AG04449 (cell line): ENCODE measurements at regions of chr14 and their contacts with region 1.

Region 1: GRCh38 chr14:92456215-92457015 is 57.2 kb upstream of the RIN3 start:
- DNase-seq: peak; percentile 14
- H3K4me3 ChIP-seq: no peak overlapping the region
- CTCF ChIP-seq: peak; percentile 80

Region 2: GRCh38 chr14:92135267-92135666 is 321.1 kb before region 1 on chr14:
- CTCF ChIA-PET with region 1: interaction called, 48 read pairs
- POLR2A ChIA-PET with region 1: interaction called, 3 read pairs
- DNase-seq: no peak
- H3K4me3 ChIP-seq: no peak overlapping the region
- CTCF ChIP-seq: peak; percentile 33

Region 3: GRCh38 chr14:92471919-92472318 is 15.5 kb after region 1 on chr14:
- CTCF ChIA-PET with region 1: interaction called, 39 read pairs
- POLR2A ChIA-PET with region 1: interaction called, 3 read pairs
- DNase-seq: peak; percentile 47
- H3K4me3 ChIP-seq: no peak overlapping the region
- CTCF ChIP-seq: no peak

Region 4: DNA sequence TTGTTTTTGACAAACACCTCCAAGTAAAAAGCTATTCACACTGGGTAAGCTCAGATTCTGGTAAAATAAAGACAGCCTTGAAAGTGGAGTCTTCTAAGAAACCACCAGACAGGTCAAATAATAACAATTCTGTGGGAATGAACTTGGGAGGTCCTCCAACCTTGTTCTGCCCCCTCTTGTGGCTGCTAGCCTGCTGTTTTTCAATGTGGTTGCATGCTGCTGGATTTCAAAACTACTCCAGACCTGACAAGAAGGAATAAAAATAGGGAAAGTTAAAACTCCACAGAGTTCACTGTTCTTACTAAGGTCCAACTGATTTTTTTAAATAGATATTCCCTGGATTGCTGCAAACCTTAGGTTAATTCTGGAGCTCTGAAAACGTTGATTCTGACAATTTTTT is 25.0 kb after region 1 on chr14:
- CTCF ChIA-PET with region 1: interaction called, 11 read pairs
- POLR2A ChIA-PET with region 1: no interaction called
- DNase-seq: no peak
- H3K4me3 ChIP-seq: no peak overlapping the region
- CTCF ChIP-seq: peak; percentile 37

Region 5: DNA sequence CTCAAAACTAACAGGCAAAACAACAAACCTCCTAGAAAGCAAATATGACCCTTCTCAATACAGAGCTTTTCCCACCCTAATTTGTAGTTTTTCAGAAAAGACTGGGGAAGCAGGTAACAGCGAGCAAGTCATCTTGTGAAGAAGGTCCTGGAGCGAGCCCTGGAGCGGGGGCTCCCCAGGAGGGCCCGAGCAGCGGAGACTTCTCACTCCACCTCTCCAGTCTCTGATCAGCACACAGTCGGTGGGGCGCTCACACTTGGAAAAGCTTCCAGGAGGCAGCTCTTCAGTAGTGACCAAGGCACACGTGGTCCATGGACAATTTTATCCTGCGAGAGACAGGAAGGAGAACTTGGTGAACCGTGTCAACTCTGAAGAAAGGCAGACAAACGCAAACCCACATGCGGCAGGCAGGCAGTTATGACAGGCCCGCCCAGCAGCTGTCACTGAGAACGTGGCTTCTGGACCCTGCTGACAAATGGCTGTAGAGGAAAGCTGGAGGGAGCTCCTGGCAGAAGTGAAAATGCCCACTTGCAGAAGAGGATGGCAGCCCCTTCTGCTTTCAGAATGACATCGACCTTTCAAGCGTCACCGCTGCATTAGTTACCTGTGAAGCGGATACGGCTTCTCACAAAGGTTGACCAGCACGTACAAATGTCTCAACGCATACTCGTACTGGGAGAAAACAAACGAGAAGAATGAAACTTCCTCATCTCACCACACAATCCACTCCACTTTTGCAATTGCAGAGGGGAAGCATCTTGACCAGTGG is 247.8 kb after region 1 on chr14:
- CTCF ChIA-PET with region 1: no interaction called
- POLR2A ChIA-PET with region 1: no interaction called
- DNase-seq: no peak
- H3K4me3 ChIP-seq: no peak overlapping the region
- CTCF ChIP-seq: no peak

Region 6: DNA sequence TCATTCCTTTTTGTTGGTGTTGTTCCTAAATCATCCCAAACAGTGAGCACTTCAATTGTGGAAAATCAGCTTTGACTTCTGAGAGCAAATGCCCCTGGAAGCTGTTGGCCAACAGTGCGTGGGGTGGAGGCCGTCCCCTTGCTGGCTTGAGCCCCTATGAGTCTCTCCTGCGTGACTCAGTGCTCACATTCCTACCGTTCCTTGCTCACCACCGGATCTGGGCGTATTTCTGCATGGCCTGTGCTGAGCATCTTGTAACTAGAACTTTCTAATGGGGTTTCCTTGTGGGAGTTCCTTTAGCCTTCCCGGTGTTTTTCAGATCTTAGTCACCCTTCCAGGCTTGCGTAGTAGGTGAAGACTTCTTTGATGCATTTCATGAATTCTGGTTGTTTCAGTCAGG is 1917.3 kb after region 1 on chr14:
- CTCF ChIA-PET with region 1: no interaction called
- POLR2A ChIA-PET with region 1: no interaction called
- DNase-seq: peak; percentile 90
- H3K4me3 ChIP-seq: no peak overlapping the region
- CTCF ChIP-seq: no peak